H1 (cell line): ENCODE measurements at regions of chr14 and their contacts with region 1.

Region 1: DNA sequence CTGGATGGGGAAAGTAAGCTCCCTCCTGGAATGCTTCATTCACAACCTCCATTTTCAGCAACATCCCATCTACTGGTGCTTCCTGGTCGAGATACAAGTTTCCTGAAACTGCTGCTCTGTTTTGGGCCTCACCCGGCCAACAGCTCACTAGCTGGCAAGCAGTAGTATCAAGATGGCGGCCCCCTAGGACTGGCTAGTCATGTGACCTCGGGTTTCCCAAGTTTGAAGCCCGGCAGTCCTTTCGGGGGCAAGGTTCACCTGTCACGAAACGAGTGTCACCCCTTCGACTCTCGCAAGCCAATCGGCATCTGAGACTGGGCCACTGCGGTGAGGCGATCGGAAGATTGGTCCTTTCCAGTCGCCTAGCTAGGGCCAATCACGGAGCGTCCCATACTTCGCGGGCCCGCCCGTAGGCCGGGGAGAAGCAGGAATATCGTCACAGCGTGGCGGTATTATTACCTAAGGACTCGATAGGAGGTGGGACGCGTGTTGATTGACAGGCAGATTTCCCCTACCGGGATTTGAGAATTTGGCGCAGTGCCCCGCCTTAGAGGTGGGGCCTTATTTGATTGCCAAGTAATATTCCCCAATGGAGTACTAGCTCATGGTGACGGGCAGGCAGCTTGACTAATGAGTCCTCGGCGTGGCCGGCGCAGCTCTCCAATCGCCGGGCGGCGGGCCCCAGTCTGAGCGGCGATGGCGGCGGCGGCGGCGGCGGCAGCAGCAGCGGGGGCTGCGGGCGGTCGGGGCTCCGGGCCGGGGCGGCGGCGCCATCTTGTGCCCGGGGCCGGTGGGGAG is at the start of gene PABPN1:
- DNase-seq: peak; percentile 94 to 99
- H3K4me3 ChIP-seq: peak within 1 kb of the TSS; percentile 96 to 100 (median 99)
- H3K27ac ChIP-seq: peak within 1 kb of the TSS; percentile 92
- H3K4me1 ChIP-seq: peaks cover 0 to 6% (median 2%) of the 10 kb centered on the region in 4 experiments; a peak in 6 of 7 replicates
- H3K27me3 ChIP-seq: no peaks in the 10 kb centered on the region
- CTCF ChIP-seq: no peak
- EP300 ChIP-seq: no peak
- POLR2A ChIP-seq: peak; percentile 81 to 94
- RAD21 ChIP-seq: no peak
- total RNA-seq, gene PABPN1: 300 and 312 TPM in 2 replicates

Region 2: DNA sequence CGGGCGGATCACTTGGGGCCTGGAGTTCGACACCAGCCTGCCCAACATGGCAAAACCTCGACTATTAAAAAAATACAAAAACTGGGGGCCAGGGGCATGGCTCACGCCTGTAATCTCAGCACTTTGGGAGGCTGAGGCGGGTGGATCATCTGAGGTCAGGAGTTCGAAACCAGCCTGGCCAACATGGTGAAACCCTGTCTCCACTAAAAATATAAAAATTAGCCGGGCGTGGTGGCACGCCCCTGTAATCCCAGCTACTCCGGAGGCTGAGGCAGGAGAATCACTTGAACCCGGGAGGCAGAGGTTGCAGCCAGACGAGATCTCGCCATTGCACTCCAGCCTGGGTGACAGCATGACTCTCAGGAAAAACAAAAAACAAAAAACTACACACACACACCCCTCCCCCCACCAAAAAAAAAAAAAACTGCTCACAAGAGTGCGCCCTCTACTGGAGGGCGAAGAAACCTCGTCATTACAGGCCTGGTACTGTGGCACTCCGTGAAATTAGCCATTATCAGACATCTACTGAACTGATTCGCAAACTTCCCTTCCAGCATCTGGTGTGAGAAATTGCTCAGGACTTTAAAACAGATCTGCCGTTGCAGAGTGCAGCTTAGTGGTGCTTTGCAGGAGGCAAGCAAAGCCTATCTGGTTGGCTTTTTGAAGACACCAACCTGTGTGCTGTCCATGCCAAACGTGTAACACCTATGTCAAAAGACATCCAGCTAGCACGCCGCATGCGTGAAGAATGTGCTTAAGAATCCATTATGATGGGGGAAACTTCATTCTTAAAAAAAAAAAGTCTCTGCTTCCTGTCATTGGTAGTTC is 26.0 kb before region 1 on chr14:
- CTCF ChIA-PET with region 1: interaction called, 28 read pairs
- POLR2A ChIA-PET with region 1: interaction called, 5 read pairs
- DNase-seq: peak in 1 of 2 experiments; percentile 56
- H3K4me3 ChIP-seq: no peak overlapping the region
- H3K27ac ChIP-seq: no peak overlapping the region
- H3K4me1 ChIP-seq: no peaks in the 10 kb centered on the region; a peak in 3 of 7 replicates
- H3K27me3 ChIP-seq: peaks cover 42 to 80% (median 73%) of the 10 kb centered on the region in 4 experiments
- CTCF ChIP-seq: peak; percentile 64 to 80 (median 66)
- EP300 ChIP-seq: 0 out of 3 replicates have a peak, but pooled peaks of 1 of the 2 experiments have one; percentile 12
- POLR2A ChIP-seq: no peak
- RAD21 ChIP-seq: peak; percentile 32 to 55; a peak in 2 of 4 replicates

Region 3: GRCh38 chr14:23306410-23307145 is 14.4 kb before region 1 on chr14 and contains the start of gene BCL2L2:
- CTCF ChIA-PET with region 1: interaction called, 26 read pairs
- POLR2A ChIA-PET with region 1: interaction called, 48 read pairs
- DNase-seq: peak; percentile 70 to 90
- H3K4me3 ChIP-seq: peak within 1 kb of the TSS; percentile 57 to 90 (median 83)
- H3K27ac ChIP-seq: peak within 1 kb of the TSS; percentile 83; the same call in 1 of the 2 replicates
- H3K4me1 ChIP-seq: peaks cover 0 to 3% (median 1%) of the 10 kb centered on the region in 4 experiments; a peak in 4 of 7 replicates
- H3K27me3 ChIP-seq: peaks cover 0 to 12% (median 5%) of the 10 kb centered on the region in 4 experiments; a peak in 4 of 7 replicates
- CTCF ChIP-seq: no peak
- EP300 ChIP-seq: peak in 1 of 2 experiments; percentile 79; a peak in 1 of 3 replicates
- POLR2A ChIP-seq: peak; percentile 85 to 91
- RAD21 ChIP-seq: 0 out of 4 replicates have a peak, but pooled peaks of 1 of the 2 experiments have one; percentile 9
- total RNA-seq, gene BCL2L2: 13.3 and 13.8 TPM in 2 replicates

Region 4: DNA sequence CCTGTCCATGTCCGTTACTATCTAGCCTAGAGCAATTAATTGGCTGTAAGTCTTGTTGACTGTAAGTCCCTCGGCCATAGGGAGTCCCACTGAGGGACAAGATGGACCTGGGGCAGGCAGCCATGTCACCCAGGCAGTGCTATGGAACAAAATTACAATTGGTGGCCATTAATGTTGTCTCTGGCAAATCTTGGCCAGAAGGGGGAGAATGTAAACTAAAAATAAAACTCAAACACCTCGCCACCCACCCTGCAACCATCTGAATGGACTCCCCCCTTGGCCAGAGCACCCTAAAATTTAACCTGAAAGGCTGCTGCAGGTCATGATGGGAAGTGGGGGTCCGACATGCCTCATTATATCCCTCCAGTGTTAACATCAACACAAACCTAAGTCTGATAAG is 23.5 kb after region 1 on chr14:
- CTCF ChIA-PET with region 1: interaction called, 27 read pairs
- POLR2A ChIA-PET with region 1: interaction called, 25 read pairs
- DNase-seq: no peak
- H3K4me3 ChIP-seq: no peak overlapping the region
- H3K27ac ChIP-seq: no peak overlapping the region
- H3K4me1 ChIP-seq: peaks cover 0 to 4% (median 1%) of the 10 kb centered on the region in 4 experiments; a peak in 3 of 7 replicates
- H3K27me3 ChIP-seq: no peaks in the 10 kb centered on the region
- CTCF ChIP-seq: no peak
- EP300 ChIP-seq: no peak
- POLR2A ChIP-seq: no peak
- RAD21 ChIP-seq: no peak

Region 5: DNA sequence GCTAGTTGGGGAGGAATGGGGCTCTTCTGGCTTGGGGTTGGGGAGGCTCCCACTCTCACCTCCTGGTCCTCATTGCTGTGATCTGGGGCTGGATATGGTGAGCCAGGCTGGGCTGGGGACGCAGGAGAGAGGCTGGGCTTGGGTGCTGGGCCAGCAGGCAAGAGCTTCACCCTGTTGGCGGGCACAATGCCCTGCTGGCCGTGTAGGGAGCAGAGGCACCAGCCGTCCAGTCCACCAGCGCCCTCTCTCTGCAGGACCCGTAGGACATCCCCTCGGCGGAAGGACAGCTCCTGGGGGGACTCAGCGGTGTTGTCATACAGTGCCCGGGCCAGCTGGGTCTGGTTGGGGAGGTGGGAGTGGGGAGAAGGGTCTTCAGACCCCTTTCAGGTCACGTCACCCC is 39.5 kb after region 1 on chr14:
- CTCF ChIA-PET with region 1: interaction called, 78 read pairs
- POLR2A ChIA-PET with region 1: interaction called, 37 read pairs
- DNase-seq: peak in 1 of 2 experiments; percentile 66
- H3K4me3 ChIP-seq: no peak overlapping the region
- H3K27ac ChIP-seq: no peak overlapping the region
- H3K4me1 ChIP-seq: peaks cover 0 to 14% (median 10%) of the 10 kb centered on the region in 4 experiments; a peak in 5 of 7 replicates
- H3K27me3 ChIP-seq: no peaks in the 10 kb centered on the region; a peak in 1 of 7 replicates
- CTCF ChIP-seq: peak; percentile 67 to 91 (median 75)
- EP300 ChIP-seq: no peak
- POLR2A ChIP-seq: no peak
- RAD21 ChIP-seq: peak; percentile 56 to 67

Region 6: DNA sequence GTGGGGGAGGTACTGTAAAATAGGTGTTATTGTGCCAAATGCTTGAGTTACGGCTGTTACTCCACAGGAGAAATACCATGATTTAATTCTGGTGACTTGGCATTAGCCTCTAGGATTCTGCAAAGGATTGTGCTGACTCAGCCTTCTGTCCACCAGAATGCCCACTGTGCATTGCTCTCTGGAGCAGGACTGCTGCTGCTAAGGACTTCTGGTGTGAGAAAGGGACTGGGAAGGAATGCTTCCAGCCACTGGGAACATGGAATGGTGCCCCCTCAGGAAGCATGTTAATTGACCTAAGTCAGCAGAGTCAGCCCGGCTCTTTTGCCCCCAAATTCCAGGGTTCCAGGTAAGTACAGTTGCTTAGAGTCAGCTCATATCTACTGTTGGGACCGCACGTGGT is 197.7 kb after region 1 on chr14:
- CTCF ChIA-PET with region 1: no interaction called
- POLR2A ChIA-PET with region 1: no interaction called
- DNase-seq: peak in 1 of 2 experiments; percentile 54
- H3K4me3 ChIP-seq: no peak overlapping the region
- H3K27ac ChIP-seq: no peak overlapping the region
- H3K4me1 ChIP-seq: peaks cover 7 to 10% (median 9%) of the 10 kb centered on the region in 4 experiments
- H3K27me3 ChIP-seq: peaks cover 0 to 4% (median 0%) of the 10 kb centered on the region in 4 experiments; a peak in 1 of 7 replicates
- CTCF ChIP-seq: peak in 1 of 3 experiments; percentile 30; a peak in 1 of 4 replicates
- EP300 ChIP-seq: no peak
- POLR2A ChIP-seq: peak in 1 of 2 experiments; percentile 58; a peak in 1 of 3 replicates
- RAD21 ChIP-seq: no peak